Panc1 (cell line): ENCODE measurements at regions of chr7 and their contacts with region 1.

Region 1: DNA sequence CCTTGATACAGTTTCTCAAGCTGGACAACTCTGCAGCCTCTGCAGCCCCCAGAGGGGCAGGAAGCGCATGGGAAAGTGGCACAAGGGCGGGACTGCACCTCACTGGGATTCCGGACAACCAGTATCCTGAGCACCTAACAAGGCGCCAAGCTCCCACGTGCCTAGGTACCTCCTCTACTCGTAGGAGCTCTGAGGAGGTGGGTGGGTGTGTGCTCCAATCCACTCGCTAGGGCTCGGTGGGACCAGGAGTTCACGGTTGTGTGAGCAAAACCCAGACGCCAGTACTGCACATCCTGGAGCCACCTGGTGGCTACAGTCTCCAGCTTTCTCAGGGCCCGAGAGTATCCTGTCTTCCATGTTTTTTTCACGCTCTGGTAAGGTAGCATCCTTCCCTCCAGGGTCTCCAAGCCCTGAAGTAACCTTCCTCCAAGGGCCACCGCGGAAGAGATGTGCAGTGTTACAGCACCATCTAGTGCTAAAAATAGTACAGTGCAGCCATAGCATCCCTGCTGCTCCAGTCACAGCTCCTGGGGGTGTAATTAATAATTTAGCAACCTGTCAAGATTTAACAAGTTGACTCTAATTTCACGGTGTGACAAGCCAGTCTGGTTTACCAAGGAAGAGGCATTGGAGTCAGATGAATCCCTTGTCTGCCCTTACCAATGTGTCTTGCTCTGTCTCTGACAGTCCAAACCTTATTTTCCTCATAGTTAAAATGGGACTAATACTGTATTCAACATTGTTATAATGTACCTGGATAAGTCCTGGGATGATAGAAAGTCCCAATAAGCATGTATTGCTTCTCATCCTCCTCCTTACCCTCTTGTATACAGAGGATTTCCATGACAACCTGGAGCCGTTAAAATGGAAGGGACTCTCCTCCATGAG is 70.4 kb downstream of the HERPUD2 start:
- DNase-seq: peak; percentile 43
- ATAC-seq: peak; percentile 93
- H3K4me3 ChIP-seq: no peak overlapping the region
- H3K27ac ChIP-seq: no peak overlapping the region
- H3K4me1 ChIP-seq: no peaks in the 10 kb centered on the region
- H3K27me3 ChIP-seq: no peaks in the 10 kb centered on the region
- CTCF ChIP-seq: peak; percentile 94

Region 2: GRCh38 chr7:33623267-33623666 is 2001.3 kb before region 1 on chr7:
- CTCF ChIA-PET with region 1: no interaction called
- POLR2A ChIA-PET with region 1: no interaction called
- in situ Hi-C with region 1: no loop called
- intact Hi-C with region 1: no loop called
- DNase-seq: no peak
- ATAC-seq: no peak
- H3K4me3 ChIP-seq: no peak overlapping the region
- H3K27ac ChIP-seq: no peak overlapping the region
- H3K4me1 ChIP-seq: no peaks in the 10 kb centered on the region
- H3K27me3 ChIP-seq: no peaks in the 10 kb centered on the region
- CTCF ChIP-seq: no peak

Region 3: GRCh38 chr7:35185907-35186731 is 438.4 kb before region 1 on chr7:
- CTCF ChIA-PET with region 1: no interaction called
- POLR2A ChIA-PET with region 1: no interaction called
- in situ Hi-C with region 1: no loop called
- intact Hi-C with region 1: loop called (anchors 5 kb)
- DNase-seq: no peak
- ATAC-seq: peak; percentile 94
- H3K4me3 ChIP-seq: peak overlapping the region; percentile 63 to 74
- H3K27ac ChIP-seq: peak overlapping the region; percentile 62
- H3K4me1 ChIP-seq: no peaks in the 10 kb centered on the region
- H3K27me3 ChIP-seq: no peaks in the 10 kb centered on the region
- CTCF ChIP-seq: peak; percentile 32

Region 4: DNA sequence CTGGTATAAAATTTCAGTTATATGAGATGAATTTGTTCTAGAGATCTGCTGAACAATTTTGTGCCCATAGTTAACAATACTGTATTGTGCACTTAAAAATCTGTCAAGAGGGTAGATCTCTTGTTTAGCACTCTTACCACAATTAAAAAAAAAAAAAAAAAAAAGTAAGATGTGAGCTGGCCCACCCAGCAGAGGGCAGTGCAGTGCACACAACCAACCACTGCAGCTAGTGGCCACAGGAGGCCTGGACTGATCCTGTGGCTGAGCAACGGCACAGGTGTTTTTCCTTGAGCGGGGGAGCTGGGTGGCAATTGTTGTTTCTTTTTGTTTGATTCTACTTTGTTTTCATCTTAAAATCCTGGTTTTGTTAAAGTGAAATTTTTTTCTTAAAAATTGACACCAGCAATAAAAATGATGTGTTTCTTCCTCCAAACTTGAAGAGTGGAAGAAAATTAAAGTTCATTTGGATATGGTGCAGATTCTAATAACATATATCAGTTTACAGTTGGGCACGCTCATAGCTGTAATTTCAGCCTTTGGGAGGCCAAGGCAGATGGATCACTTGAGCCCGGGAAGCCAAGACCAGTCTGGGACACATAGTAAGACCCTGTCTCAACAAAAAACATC is 199.6 kb before region 1 on chr7:
- CTCF ChIA-PET with region 1: interaction called, 3 read pairs
- POLR2A ChIA-PET with region 1: interaction called, 4 read pairs
- in situ Hi-C with region 1: no loop called
- intact Hi-C with region 1: loop called (anchors 2 kb)
- DNase-seq: peak; percentile 36
- ATAC-seq: peak; percentile 91
- H3K4me3 ChIP-seq: no peak overlapping the region
- H3K27ac ChIP-seq: no peak overlapping the region
- H3K4me1 ChIP-seq: no peaks in the 10 kb centered on the region
- H3K27me3 ChIP-seq: peaks cover 26% of the 10 kb centered on the region
- CTCF ChIP-seq: peak; percentile 93

Region 5: GRCh38 chr7:35537067-35538023 is 87.2 kb before region 1 on chr7:
- CTCF ChIA-PET with region 1: interaction called, 3 read pairs
- POLR2A ChIA-PET with region 1: no interaction called
- in situ Hi-C with region 1: no loop called
- intact Hi-C with region 1: loop called (anchors 1 kb)
- DNase-seq: peak; percentile 50
- ATAC-seq: peak; percentile 99
- H3K4me3 ChIP-seq: peak overlapping the region; percentile 20 to 41; a peak in 3 of 4 replicates
- H3K27ac ChIP-seq: no peak overlapping the region
- H3K4me1 ChIP-seq: no peaks in the 10 kb centered on the region
- H3K27me3 ChIP-seq: peaks cover 26% of the 10 kb centered on the region
- CTCF ChIP-seq: peak; percentile 97

Region 6: DNA sequence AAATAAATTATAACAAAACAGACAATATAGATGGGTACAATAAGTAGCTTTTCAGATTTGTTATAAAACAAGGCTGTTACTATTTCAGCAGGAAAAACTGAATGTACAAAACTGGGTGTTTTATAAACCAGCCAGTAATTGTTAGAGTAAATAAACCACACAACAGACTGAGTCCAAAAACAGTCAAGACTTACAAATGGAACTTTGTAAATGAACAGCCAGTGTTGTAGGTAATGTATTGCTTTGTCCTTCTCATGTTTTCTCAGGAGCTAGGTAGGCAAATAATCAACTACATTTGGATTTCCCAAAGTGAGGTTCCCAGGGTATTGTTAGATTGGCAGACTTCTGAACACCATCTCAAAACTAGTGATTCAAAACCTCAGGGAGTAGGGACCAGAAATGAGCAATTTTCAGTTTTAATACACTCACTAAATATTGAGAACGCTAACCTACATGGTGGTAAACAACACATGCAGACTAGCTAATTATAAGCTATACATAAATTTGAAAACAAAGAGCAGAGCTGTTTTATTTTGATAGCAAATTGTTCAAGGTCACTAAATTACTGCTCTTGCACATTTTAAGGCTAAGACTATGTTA is 34.2 kb after region 1 on chr7:
- CTCF ChIA-PET with region 1: no interaction called
- POLR2A ChIA-PET with region 1: no interaction called
- in situ Hi-C with region 1: no loop called
- intact Hi-C with region 1: no loop called
- DNase-seq: no peak
- ATAC-seq: no peak
- H3K4me3 ChIP-seq: no peak overlapping the region
- H3K27ac ChIP-seq: no peak overlapping the region
- H3K4me1 ChIP-seq: no peaks in the 10 kb centered on the region
- H3K27me3 ChIP-seq: no peaks in the 10 kb centered on the region
- CTCF ChIP-seq: no peak